ENCODE measurements at regions of chr3 and their contacts with region 1.

Region 1: DNA sequence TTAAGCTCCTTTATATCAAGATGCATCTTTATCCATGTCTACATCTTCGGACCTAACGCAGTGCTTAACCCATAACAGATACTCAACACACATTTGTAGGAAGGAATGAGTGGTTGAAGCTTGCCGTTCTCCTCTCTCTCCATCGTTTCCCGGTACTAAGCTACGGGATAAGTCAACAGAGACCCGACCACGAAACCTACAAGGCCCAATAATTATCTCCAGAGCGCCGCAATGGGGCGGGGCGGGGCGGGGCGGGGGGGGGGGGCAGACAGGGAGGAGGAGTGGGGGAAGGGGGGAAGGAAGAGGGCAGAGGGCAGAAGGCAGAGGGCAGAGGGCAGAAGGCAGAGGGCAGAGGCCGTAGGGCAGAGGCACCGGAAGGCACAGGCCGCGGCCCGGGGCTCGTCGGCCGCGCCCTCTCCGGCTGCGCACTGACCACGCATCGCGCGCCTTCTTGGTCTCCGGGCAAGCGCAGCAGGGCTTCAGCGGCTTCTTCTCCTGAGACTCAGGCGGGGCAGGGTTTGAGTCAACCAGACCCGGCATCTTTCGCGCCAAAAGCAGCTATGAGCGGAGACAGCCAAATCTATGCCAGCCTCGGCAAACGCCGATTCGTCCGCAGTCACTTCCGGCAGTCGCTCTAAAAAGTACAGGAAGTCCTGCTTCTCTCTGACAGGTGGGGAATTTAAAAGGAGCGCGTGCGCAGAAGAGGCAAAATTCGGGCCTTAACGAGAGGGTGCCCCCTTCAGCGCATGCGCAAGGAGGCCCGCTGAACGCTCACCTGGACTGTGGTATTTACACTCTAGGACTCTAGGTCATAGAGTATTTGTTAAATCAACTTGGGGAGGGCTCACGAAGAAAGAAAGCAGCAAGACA is at the start of gene COX17:
- DNase-seq: peak; percentile 98
- total RNA-seq, gene COX17: 49.2 to 53.6 TPM

Region 2: DNA sequence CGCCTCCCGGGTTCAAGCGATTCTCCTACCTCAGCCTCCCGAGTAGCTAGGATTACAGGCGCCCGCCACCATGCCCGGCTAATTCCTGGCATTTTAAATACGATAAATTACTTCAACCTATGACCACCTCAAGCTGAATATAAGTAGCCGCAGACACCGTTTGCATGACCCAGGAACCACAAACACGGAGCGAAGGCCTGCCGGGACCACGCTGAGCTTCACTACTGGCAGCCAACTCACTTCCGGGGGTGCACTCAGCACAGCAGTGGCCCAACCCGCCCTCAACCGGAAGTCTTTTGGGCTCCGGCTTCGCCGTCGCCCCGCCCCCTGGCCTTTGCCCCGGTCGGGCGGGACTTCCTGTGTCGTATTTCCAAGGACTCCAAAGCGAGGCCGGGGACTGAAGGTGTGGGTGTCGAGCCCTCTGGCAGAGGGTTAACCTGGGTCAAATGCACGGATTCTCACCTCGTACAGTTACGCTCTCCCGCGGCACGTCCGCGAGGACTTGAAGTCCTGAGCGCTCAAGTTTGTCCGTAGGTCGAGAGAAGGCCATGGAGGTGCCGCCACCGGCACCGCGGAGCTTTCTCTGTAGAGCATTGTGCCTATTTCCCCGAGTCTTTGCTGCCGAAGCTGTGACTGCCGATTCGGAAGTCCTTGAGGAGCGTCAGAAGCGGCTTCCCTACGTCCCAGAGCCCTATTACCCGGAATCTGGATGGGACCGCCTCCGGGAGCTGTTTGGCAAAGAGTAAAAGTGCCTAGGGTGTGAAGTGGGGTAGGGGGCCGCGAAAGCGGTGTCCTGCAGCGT is 178.6 kb before region 1 on chr3 and contains the start of gene TIMMDC1:
- intact Hi-C with region 1: loop called in 1 of 2 experiments (anchors 10 kb)
- DNase-seq: peak; percentile 99
- total RNA-seq, gene TIMMDC1: 74.9 to 79.3 TPM

Region 3: GRCh38 chr3:119524931-119525662 is 151.9 kb before region 1 on chr3:
- intact Hi-C with region 1: loop called in 1 of 2 experiments (anchors 10 kb)
- DNase-seq: no peak

Region 4: DNA sequence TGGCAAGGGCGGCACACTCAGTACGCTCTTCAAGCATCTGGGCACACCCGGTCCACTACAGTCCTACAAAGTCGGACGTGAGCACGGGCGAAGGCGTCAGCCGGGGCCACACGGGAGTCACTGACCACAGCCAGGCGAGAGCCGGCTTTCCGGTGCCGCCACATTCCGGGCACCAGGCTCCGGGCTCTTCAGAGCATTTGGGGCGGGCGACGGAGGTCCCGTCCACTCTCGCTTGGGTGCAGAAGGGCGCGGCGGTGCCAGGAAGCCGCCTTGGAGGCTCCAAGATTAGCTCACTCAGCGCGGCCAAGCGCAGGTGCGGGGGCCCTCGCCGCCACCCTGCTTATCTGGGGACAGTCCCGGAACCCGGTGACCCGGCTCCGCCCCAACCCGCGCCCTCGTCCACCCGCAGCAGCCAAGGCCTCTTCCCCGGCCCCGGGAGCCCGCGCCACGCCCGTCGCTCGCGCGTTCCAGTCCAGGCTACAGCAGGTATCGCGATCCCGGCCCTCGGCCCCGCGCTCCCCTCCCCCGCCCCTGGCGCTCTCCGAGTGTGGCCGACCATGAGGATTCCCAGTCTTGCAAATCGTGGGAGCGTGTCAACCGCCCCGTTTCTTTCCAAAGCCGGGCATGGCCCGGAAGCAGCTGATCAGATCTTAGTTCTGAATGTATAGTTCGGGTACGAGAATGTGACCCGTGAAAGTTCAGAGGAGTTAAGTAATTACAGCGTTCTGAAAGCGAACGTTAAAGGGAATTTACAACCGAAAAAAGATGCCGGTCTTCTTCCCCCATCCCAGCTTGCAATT is 97.4 kb before region 1 on chr3 and contains the start of gene ADPRH:
- intact Hi-C with region 1: loop called in 1 of 2 experiments (anchors 10 kb)
- DNase-seq: peak; percentile 94
- total RNA-seq, gene ADPRH: 15.3 to 17.9 TPM